ENCODE measurements at regions of chr17 and their contacts with region 1.

Region 1: DNA sequence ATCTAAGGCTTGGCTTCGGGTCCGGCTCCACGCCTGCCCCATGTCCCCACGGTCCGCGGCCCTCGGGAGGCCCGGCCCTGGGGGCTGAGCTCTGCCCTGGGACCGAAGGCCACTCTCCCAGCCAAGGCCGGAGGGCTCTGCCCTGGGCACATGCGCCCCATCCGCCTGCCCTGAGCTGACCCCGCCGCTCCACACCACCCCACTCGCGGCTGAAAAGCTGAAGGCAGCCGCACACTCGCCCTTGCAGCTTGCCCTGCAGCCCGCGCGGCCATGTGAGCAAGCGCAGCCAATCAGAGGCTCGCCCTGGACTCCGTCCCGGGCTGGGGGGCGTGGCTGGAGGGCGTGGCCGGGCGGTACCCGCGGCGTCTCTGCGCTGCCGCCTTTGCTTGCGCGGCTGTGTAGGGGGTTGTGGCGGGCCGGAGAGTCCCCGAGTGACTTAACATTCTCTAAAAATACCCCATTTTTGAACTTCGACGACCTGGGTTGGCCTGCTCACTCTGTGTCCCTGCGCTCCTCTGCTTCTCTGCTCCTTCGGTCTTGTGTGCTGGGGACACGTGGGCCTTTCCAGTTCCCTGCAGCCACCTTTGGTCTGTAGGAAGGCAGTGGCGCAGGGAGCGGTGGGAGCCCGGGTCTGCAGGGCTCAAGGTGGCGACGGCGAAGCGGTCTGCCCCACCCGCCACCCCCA is 8.8 kb upstream of the MAP2K3 start:
- DNase-seq: peak; percentile 96 to 97 (median 96)
- ATAC-seq: peak; percentile 93 to 96 (median 95)
- H3K4me3 ChIP-seq: peak overlapping the region; percentile 61 to 68 (median 65)
- H3K27ac ChIP-seq: peak overlapping the region in 2 of 3 donors; percentile 6 to 30
- H3K4me1 ChIP-seq: peaks cover 0 to 6% (median 2%) of the 10 kb centered on the region in 4 donors
- H3K27me3 ChIP-seq: no peaks in the 10 kb centered on the region
- CTCF ChIP-seq: peak in 1 of 4 donors; percentile 5
- POLR2A ChIP-seq: peak; percentile 33

Region 2: DNA sequence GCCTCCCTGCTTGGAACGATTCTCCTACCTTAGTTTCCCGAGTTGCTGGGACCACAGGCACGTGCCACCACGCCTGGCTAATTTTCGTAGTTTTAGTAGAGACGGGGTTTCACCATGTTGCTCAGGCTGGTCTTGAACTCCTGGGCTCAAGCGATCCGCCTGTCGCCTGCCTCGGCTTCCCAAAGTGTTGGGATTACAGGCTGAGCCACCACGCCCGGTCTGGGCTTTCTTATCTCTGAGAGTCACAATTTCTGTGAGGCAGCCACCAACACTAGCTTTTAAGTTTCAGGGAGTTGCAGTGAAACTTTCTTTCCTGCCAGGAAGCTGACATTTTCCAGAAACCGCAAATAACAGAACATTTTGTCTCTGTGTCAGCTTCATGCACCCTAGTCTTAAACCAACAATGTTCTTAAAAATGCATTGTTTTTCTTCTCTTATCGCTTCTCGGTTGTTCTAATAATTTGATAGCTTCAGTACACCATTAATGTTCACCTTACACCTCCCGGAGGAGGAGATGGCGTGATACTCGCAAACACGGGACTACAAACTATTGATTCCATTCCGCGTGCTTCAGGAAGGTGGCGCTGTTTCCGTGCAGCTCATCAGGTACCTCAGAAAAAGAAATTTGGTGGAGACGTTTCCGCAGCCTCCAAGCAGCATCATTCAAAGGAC is 156.3 kb before region 1 on chr17:
- intact Hi-C with region 1: loop called in 1 of 2 experiments (anchors 10 kb)
- DNase-seq: peak; percentile 64 to 70 (median 69)
- ATAC-seq: peak; percentile 92 to 98 (median 94)
- H3K4me3 ChIP-seq: no peak overlapping the region
- H3K27ac ChIP-seq: no peak overlapping the region
- H3K4me1 ChIP-seq: peaks cover 0 to 4% (median 0%) of the 10 kb centered on the region in 4 donors
- H3K27me3 ChIP-seq: no peaks in the 10 kb centered on the region
- CTCF ChIP-seq: peak; percentile 80 to 83 (median 80)
- POLR2A ChIP-seq: no peak

Region 3: GRCh38 chr17:21445091-21445650 is 169.4 kb after region 1 on chr17:
- intact Hi-C with region 1: loop called in 1 of 2 experiments (anchors 10 kb)
- DNase-seq: no peak
- ATAC-seq: no peak
- H3K4me3 ChIP-seq: no peak overlapping the region
- H3K27ac ChIP-seq: no peak overlapping the region
- H3K4me1 ChIP-seq: no peaks in the 10 kb centered on the region
- H3K27me3 ChIP-seq: no peaks in the 10 kb centered on the region
- CTCF ChIP-seq: no peak
- POLR2A ChIP-seq: no peak